Activated CD4-positive, alpha-beta T cell treated with anti-CD3 and anti-CD28 coated beads for 36 hours (primary cell): ENCODE measurements at regions of chr18 and their contacts with region 1.

Region 1: DNA sequence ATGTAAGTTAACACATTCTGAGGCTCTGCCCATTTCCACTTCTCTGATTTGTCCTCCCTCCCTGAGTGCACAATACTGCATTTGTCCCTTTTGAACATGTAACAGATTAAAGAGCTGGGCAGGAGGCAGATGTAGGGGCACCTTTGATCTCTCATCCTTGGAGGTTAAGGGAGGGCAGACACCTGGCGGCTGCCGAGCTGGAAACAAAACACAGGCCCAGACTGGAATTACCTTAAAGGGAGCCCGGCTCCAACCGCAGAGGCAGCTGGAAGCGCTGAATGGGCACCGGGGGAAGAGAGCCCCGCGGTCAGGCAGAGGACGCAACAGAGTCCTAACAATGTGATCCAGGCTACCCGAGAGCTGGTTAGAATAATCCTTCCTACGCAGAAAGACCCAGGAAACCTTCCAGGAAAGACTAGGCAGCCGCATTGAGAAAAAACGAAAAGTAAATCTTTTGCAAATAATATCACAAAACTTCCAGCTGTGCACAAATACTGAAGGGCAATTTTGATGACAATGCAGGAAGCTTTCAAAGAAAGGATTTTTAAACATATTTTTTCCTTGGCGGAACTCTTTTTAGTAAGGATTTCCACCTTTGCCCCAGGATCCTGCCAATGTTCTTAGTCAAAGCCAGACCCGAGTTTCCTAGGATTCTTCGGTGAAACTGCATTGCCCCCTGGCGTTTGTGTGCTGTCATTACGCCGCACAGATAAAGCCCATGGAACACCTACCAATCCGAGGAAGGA is 216.0 kb downstream of the TGIF1 start:
- DNase-seq: peak; percentile 81
- ATAC-seq: peak; percentile 64
- H3K4me3 Mint-ChIP-seq: peak overlapping the region; percentile 28
- H3K27ac Mint-ChIP-seq: peak overlapping the region; percentile 17
- H3K4me1 Mint-ChIP-seq: peaks cover 36% of the 10 kb centered on the region
- H3K27me3 Mint-ChIP-seq: no peaks in the 10 kb centered on the region

Region 2: GRCh38 chr18:3269241-3269913 is 396.6 kb before region 1 on chr18:
- CTCF ChIA-PET with region 1: interaction called, 15 read pairs
- POLR2A ChIA-PET with region 1: no interaction called
- intact Hi-C with region 1: no loop called
- DNase-seq: no peak
- ATAC-seq: no peak
- H3K4me3 Mint-ChIP-seq: no peak overlapping the region
- H3K27ac Mint-ChIP-seq: peak overlapping the region; percentile 77
- H3K4me1 Mint-ChIP-seq: peaks cover 78% of the 10 kb centered on the region
- H3K27me3 Mint-ChIP-seq: no peaks in the 10 kb centered on the region

Region 3: GRCh38 chr18:3321133-3321812 is 344.7 kb before region 1 on chr18:
- CTCF ChIA-PET with region 1: interaction called, 11 read pairs
- POLR2A ChIA-PET with region 1: no interaction called
- intact Hi-C with region 1: no loop called
- DNase-seq: peak; percentile 54
- ATAC-seq: peak; percentile 38
- H3K4me3 Mint-ChIP-seq: no peak overlapping the region
- H3K27ac Mint-ChIP-seq: no peak overlapping the region
- H3K4me1 Mint-ChIP-seq: peaks cover 23% of the 10 kb centered on the region
- H3K27me3 Mint-ChIP-seq: peaks cover 9% of the 10 kb centered on the region

Region 4: DNA sequence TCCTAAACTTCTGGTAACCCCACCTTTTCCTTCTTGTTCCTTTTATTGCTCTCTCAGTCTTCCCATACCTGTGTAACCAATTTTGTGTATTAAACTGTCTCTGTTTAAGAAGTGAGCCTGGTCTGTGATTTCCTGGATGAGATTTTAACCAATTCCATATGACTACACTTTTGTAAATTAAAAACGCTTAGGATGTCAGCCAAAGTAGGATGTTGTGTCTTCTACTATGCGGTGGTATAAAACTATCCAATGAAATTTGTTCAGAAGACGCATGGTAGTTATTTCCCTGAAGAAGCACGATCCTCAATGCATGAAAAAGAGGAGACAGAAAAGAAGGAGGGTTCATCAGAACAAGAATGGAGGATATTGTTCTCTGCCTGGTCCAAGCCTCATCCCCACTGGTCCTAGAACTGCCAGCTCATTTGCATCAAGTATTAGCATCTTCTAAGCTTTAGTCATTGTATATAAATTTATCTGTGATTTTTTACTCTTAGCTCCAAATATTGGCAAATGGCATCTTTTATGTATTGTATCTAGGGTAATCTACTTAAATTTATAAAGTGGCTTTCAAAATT is 88.6 kb before region 1 on chr18:
- CTCF ChIA-PET with region 1: interaction called, 12 read pairs
- POLR2A ChIA-PET with region 1: no interaction called
- intact Hi-C with region 1: no loop called
- DNase-seq: no peak
- ATAC-seq: no peak
- H3K4me3 Mint-ChIP-seq: no peak overlapping the region
- H3K27ac Mint-ChIP-seq: no peak overlapping the region
- H3K4me1 Mint-ChIP-seq: peaks cover 5% of the 10 kb centered on the region
- H3K27me3 Mint-ChIP-seq: no peaks in the 10 kb centered on the region

Region 5: GRCh38 chr18:3645384-3646156 is 20.4 kb before region 1 on chr18:
- CTCF ChIA-PET with region 1: interaction called, 19 read pairs
- POLR2A ChIA-PET with region 1: interaction called, 4 read pairs
- intact Hi-C with region 1: no loop called
- DNase-seq: no peak
- ATAC-seq: no peak
- H3K4me3 Mint-ChIP-seq: no peak overlapping the region
- H3K27ac Mint-ChIP-seq: no peak overlapping the region
- H3K4me1 Mint-ChIP-seq: peaks cover 40% of the 10 kb centered on the region
- H3K27me3 Mint-ChIP-seq: no peaks in the 10 kb centered on the region

Region 6: GRCh38 chr18:3722320-3723000 is 56.5 kb after region 1 on chr18:
- CTCF ChIA-PET with region 1: interaction called, 3 read pairs
- POLR2A ChIA-PET with region 1: no interaction called
- intact Hi-C with region 1: loop called in 1 of 2 experiments (anchors 10 kb)
- DNase-seq: no peak
- ATAC-seq: no peak
- H3K4me3 Mint-ChIP-seq: no peak overlapping the region
- H3K27ac Mint-ChIP-seq: no peak overlapping the region
- H3K4me1 Mint-ChIP-seq: no peaks in the 10 kb centered on the region
- H3K27me3 Mint-ChIP-seq: peaks cover 10% of the 10 kb centered on the region